ENCODE measurements at regions of chr2 and their contacts with region 1.

Region 1: GRCh38 chr2:150088534-150088933 is 398.9 kb downstream of the RND3 start:
- DNase-seq: peak; percentile 79 to 89
- H3K4me3 ChIP-seq: no peak overlapping the region
- H3K4me3 Mint-ChIP-seq: peak overlapping the region; percentile 47
- H3K27ac Mint-ChIP-seq: peak overlapping the region; percentile 97
- H3K4me1 ChIP-seq: peaks cover 27% of the 10 kb centered on the region
- H3K4me1 Mint-ChIP-seq: peaks cover 28% of the 10 kb centered on the region
- H3K27me3 ChIP-seq: no peaks in the 10 kb centered on the region
- H3K27me3 Mint-ChIP-seq: no peaks in the 10 kb centered on the region
- CTCF ChIP-seq: no peak

Region 2: DNA sequence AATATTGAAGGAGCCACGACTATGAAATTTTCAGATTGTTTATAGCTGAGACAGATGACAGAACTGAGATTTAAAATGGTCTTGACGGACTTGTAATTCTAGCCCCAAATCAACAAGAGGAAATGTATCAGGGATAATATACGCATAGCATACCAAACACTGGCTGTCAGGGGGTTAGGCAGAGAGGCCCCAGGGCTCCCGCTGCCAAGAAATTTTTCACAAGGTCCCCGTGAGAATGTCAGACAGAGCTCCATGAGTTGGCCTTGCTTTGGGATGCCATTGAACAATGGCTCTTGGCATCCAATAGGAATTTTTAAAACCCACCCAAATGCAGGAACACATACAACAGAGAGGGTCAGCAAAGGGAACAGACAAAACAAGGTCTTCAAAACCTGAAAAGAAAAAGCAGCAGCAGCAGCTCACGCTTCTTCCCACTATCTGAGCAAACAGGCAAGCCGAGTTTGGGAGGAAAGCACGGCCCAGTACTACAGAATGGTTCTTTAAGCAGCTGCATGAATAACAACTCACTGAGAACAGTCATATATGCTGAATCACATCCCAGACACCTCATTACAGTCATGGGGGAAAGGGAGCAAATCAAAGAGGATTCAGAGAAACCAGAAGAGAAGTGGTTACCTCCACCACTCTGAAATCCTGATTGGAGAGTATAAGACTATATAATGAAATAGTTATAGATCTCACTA is 46.7 kb before region 1 on chr2:
- CTCF ChIA-PET with region 1: no interaction called
- POLR2A ChIA-PET with region 1: no interaction called
- intact Hi-C with region 1: loop called (anchors 2 kb)
- DNase-seq: no peak
- H3K4me3 ChIP-seq: no peak overlapping the region
- H3K4me3 Mint-ChIP-seq: no peak overlapping the region
- H3K27ac Mint-ChIP-seq: no peak overlapping the region
- H3K4me1 ChIP-seq: peaks cover 27% of the 10 kb centered on the region
- H3K4me1 Mint-ChIP-seq: peaks cover 35% of the 10 kb centered on the region
- H3K27me3 ChIP-seq: no peaks in the 10 kb centered on the region
- H3K27me3 Mint-ChIP-seq: no peaks in the 10 kb centered on the region
- CTCF ChIP-seq: no peak

Region 3: DNA sequence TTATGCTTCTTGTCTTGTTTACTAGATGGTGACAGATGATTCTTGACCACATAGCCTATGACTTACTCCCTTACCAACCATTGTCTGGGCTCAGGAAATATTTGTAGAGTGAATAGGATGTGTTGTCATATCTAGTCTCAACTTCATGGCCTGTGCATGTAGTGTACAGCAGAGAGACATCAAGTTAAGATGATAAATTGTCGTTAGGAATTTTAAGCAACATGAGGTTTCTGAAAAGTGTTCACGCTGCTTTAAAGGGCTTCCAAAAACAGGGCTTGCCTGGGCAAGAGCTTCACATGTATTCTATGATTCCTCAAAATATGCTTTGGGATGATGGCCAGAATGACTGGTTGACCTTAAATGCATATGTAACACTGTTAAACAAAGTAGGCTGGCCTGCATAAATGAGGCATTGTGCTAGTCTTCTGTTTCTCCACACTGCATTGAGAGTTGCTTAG is 25.1 kb before region 1 on chr2:
- CTCF ChIA-PET with region 1: no interaction called
- POLR2A ChIA-PET with region 1: no interaction called
- intact Hi-C with region 1: no loop called
- DNase-seq: no peak
- H3K4me3 ChIP-seq: no peak overlapping the region
- H3K4me3 Mint-ChIP-seq: no peak overlapping the region
- H3K27ac Mint-ChIP-seq: no peak overlapping the region
- H3K4me1 ChIP-seq: no peaks in the 10 kb centered on the region
- H3K4me1 Mint-ChIP-seq: peaks cover under 1% of the 10 kb centered on the region
- H3K27me3 ChIP-seq: no peaks in the 10 kb centered on the region
- H3K27me3 Mint-ChIP-seq: no peaks in the 10 kb centered on the region
- CTCF ChIP-seq: no peak

Region 4: DNA sequence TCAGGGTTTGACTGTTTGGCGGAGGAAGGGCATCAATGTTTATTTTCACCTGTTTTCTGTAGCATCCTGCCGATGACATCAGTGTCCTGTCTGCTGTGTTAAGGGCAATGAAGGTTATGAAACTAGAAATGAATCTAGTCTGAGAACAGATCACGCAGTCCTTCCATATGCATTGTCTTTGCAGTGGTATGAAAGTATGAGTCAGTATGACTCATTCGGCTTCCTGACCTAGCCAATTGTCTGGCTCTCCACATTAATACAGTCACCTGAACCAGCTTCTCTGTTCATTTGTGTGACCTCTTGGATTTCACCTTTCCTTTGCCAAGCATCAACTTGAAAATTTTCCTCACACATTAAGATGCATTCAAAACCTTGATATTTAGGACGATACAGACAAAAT is 45.1 kb after region 1 on chr2:
- CTCF ChIA-PET with region 1: no interaction called
- POLR2A ChIA-PET with region 1: no interaction called
- intact Hi-C with region 1: loop called (anchors 1 kb)
- DNase-seq: peak; percentile 55 to 58
- H3K4me3 ChIP-seq: no peak overlapping the region
- H3K4me3 Mint-ChIP-seq: no peak overlapping the region
- H3K27ac Mint-ChIP-seq: no peak overlapping the region
- H3K4me1 ChIP-seq: peaks cover 43% of the 10 kb centered on the region
- H3K4me1 Mint-ChIP-seq: peaks cover 34% of the 10 kb centered on the region
- H3K27me3 ChIP-seq: no peaks in the 10 kb centered on the region
- H3K27me3 Mint-ChIP-seq: no peaks in the 10 kb centered on the region
- CTCF ChIP-seq: no peak